ENCODE measurements at regions of chr3 and their contacts with region 1.

Region 1: GRCh38 chr3:112437146-112438022 is 61.9 kb downstream of the BTLA start:
- DNase-seq: peak; percentile 21
- H3K4me3 Mint-ChIP-seq: no peak overlapping the region
- H3K27ac Mint-ChIP-seq: peak overlapping the region; percentile 40
- H3K4me1 Mint-ChIP-seq: peaks cover 40% of the 10 kb centered on the region
- H3K27me3 Mint-ChIP-seq: no peaks in the 10 kb centered on the region

Region 2: DNA sequence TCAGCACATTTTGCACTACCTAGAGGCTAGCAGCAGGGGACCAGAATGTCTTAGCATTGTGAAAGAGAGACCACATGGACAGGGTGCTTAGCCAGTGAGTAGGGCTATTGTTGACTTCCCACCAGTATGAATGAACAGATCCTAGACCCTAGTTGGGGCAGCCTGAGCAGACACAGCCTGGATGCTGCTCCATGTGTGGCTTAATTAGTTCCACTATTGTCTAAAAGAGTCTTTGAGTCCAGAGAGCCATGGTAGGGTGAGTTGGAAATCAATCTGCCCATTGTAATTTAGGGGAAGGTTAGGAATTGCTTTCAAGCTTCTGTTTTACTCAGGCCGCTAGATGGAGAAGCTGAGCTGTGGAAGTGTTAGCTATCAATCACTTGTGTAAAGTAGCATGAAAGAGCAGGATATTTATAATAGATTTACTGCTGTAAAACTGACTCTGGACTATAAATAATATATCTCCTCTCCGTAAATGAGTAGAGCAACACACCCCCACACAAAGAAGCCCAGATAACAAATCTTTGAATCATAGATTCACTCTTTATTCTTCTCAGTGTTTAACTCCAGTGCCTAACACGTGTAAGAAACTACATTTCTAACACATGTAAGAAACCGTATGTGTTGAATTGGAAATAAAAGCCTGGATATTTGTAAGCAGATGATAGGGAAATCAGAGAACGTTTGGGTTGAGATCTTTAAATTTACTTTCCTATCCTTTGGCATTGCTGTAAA is 300.3 kb before region 1 on chr3:
- CTCF ChIA-PET with region 1: interaction called, 19 read pairs
- POLR2A ChIA-PET with region 1: no interaction called
- intact Hi-C with region 1: loop called (anchors 2 kb)
- DNase-seq: peak; percentile 59
- H3K4me3 Mint-ChIP-seq: no peak overlapping the region
- H3K27ac Mint-ChIP-seq: no peak overlapping the region
- H3K4me1 Mint-ChIP-seq: peaks cover 70% of the 10 kb centered on the region
- H3K27me3 Mint-ChIP-seq: no peaks in the 10 kb centered on the region

Region 3: DNA sequence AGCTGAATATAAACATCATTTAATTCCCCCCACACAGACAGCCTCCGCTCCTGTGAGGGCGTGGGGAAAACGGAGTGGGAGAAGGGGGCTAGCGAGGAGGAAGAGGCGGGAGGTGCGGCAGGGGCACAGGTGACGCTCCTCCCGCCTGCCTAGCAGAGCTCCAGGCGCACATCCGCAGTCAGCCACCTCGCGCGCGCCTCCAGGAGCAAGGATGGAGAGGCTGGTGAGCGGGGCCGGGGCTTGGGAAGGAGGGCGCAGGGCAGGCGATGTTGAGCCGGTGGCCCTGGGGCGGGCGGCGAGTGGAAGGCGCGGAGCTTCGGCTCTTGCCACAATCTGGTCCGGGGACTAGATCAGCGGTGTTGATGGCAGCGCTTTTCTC is 104.4 kb before region 1 on chr3 and contains the start of gene CD200:
- CTCF ChIA-PET with region 1: interaction called, 44 read pairs
- POLR2A ChIA-PET with region 1: interaction called, 5 read pairs
- intact Hi-C with region 1: loop called (anchors 1 kb)
- DNase-seq: peak; percentile 71
- H3K4me3 Mint-ChIP-seq: peak within 1 kb of the TSS; percentile 87
- H3K27ac Mint-ChIP-seq: peak within 1 kb of the TSS; percentile 88
- H3K4me1 Mint-ChIP-seq: peaks cover 46% of the 10 kb centered on the region
- H3K27me3 Mint-ChIP-seq: no peaks in the 10 kb centered on the region
- total RNA-seq, gene CD200: 34.2 to 34.5 TPM

Region 4: GRCh38 chr3:112399064-112399463 is 38.3 kb before region 1 on chr3:
- CTCF ChIA-PET with region 1: interaction called, 3 read pairs
- POLR2A ChIA-PET with region 1: no interaction called
- intact Hi-C with region 1: loop called (anchors 2 kb)
- DNase-seq: no peak
- H3K4me3 Mint-ChIP-seq: no peak overlapping the region
- H3K27ac Mint-ChIP-seq: no peak overlapping the region
- H3K4me1 Mint-ChIP-seq: peaks cover 6% of the 10 kb centered on the region
- H3K27me3 Mint-ChIP-seq: peaks cover 1% of the 10 kb centered on the region

Region 5: DNA sequence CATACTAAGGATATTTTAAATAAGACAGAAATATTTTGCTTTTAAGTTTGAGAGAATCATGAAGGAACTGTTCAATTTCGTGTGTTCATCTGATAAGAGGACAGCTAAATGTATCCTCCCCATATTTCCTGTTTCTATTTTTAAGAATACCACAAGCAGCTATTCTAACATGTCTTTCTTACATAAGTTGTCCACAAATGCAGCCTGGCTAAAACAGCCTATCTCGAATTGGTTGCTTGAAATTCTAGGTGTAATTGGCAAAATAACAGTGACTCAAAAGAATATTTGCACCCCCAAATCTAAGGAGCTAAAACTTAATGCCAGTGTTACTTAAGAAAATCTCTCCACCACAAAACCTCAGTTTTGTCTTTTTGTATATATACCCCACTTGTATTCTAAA is 26.9 kb after region 1 on chr3:
- CTCF ChIA-PET with region 1: interaction called, 3 read pairs
- POLR2A ChIA-PET with region 1: no interaction called
- intact Hi-C with region 1: loop called (anchors 2 kb)
- DNase-seq: no peak
- H3K4me3 Mint-ChIP-seq: no peak overlapping the region
- H3K27ac Mint-ChIP-seq: peak overlapping the region; percentile 31
- H3K4me1 Mint-ChIP-seq: peaks cover 84% of the 10 kb centered on the region
- H3K27me3 Mint-ChIP-seq: no peaks in the 10 kb centered on the region